Sigmoid colon (tissue), 7 donors: ENCODE measurements at regions of chr16 and their contacts with region 1.

Region 1: GRCh38 chr16:51982715-51983680 is 563.9 kb downstream of the TOX3 start:
- DNase-seq: no peak
- H3K4me3 ChIP-seq: no peak overlapping the region
- H3K27ac ChIP-seq: no peak overlapping the region
- H3K4me1 ChIP-seq: no peaks in the 10 kb centered on the region
- H3K27me3 ChIP-seq: no peaks in the 10 kb centered on the region
- CTCF ChIP-seq: peak in 3 of 4 experiments; percentile 20 to 64 (median 41)
- EP300 ChIP-seq: no peak
- POLR2A ChIP-seq: no peak

Region 2: GRCh38 chr16:51818342-51818944 is 164.6 kb before region 1 on chr16:
- intact Hi-C with region 1: loop called (anchors 5 kb)
- DNase-seq: no peak
- H3K4me3 ChIP-seq: no peak overlapping the region
- H3K27ac ChIP-seq: no peak overlapping the region
- H3K4me1 ChIP-seq: no peaks in the 10 kb centered on the region
- H3K27me3 ChIP-seq: no peaks in the 10 kb centered on the region
- CTCF ChIP-seq: peak in 1 of 4 experiments; percentile 8
- EP300 ChIP-seq: no peak
- POLR2A ChIP-seq: no peak